ENCODE measurements at regions of chr15 and their contacts with region 1.

Region 1: GRCh38 chr15:81301815-81302399 is 22.0 kb downstream of the STARD5 start:
- DNase-seq: peak; percentile 60
- H3K4me3 Mint-ChIP-seq: peak overlapping the region; percentile 98
- H3K27ac Mint-ChIP-seq: peak overlapping the region; percentile 78
- H3K4me1 Mint-ChIP-seq: peaks cover 58% of the 10 kb centered on the region
- H3K27me3 Mint-ChIP-seq: no peaks in the 10 kb centered on the region

Region 2: GRCh38 chr15:81054236-81054635 is 247.7 kb before region 1 on chr15:
- CTCF ChIA-PET with region 1: no interaction called
- POLR2A ChIA-PET with region 1: no interaction called
- DNase-seq: no peak
- H3K4me3 Mint-ChIP-seq: no peak overlapping the region
- H3K27ac Mint-ChIP-seq: no peak overlapping the region
- H3K4me1 Mint-ChIP-seq: peaks cover 29% of the 10 kb centered on the region
- H3K27me3 Mint-ChIP-seq: peaks cover 5% of the 10 kb centered on the region

Region 3: DNA sequence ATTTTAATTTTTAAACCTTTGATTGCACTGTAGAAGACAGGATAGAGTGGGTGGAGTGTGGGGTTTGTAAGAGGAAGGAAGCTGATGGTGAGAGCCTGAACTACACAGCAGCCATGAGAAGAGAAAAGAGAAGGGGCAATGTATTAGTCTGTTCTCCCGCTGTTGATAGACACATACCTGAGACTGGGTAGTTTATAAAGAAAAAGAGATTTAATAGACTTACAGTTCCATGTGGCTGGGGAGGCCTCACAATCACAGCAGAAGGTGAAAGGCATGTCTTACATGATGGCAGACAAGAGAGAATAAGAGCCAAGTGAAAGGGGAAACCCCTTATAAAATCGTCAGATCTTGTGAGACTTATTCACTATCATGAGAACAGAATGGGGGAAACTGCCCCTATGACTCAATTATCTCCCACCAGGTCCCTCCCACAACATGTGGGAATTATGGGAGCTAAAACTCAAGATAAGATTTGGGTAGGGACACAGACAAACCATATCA is 15.2 kb before region 1 on chr15:
- CTCF ChIA-PET with region 1: interaction called, 8 read pairs
- POLR2A ChIA-PET with region 1: interaction called, 48 read pairs
- DNase-seq: no peak
- H3K4me3 Mint-ChIP-seq: no peak overlapping the region
- H3K27ac Mint-ChIP-seq: peak overlapping the region; percentile 69
- H3K4me1 Mint-ChIP-seq: peaks cover 49% of the 10 kb centered on the region
- H3K27me3 Mint-ChIP-seq: no peaks in the 10 kb centered on the region

Region 4: GRCh38 chr15:81311752-81312464 is 10.0 kb after region 1 on chr15:
- CTCF ChIA-PET with region 1: interaction called, 5 read pairs
- POLR2A ChIA-PET with region 1: interaction called, 35 read pairs
- DNase-seq: no peak
- H3K4me3 Mint-ChIP-seq: no peak overlapping the region
- H3K27ac Mint-ChIP-seq: peak overlapping the region; percentile 11
- H3K4me1 Mint-ChIP-seq: peaks cover 20% of the 10 kb centered on the region
- H3K27me3 Mint-ChIP-seq: no peaks in the 10 kb centered on the region

Region 5: DNA sequence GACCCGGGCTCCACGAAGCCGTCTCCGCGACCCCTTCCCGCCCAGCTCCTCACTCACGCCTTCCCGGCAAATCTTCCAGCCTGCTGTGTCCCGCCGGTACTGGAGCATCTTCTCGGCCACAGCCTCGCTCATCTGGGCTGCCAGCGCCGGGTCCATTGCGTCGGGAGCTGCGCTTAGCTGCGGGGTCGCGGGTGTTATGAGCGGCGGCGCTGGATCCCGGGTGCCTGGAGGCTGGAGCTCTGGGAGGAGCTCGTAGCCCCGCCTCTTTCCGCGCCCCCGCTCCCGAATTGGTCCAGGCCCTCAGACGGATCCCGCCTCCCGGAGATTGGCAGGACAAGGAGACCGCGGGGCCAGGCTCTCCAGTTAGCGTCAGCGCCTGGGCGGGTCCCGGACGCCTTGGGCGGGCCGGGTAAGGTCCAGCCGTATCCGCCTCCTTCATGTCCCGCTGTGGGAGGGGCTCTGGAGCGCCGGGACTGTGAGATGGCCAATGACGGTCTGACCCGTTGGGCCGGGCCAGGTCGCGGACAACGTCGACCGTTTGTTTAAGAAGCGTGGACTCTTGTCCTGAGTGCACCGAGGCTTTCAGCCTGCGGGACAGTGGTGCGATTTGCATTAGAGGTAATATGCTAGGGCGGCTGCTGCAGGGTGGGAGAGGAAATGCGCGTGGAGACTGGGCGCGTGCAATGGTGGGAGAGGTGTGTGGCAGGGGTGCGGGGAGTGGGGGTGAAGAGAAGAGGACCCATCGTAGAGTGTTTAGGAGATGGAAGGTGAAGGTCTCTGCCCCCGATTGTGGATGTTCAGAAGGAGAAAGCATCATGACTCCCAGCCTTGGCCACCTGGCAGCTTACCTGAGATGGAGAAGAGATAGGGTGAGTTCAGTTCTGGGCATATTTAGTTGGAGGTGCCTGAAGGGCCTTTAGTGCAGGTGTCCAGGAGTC is 22.3 kb after region 1 on chr15 and contains the start of gene STARD5:
- CTCF ChIA-PET with region 1: interaction called, 8 read pairs
- POLR2A ChIA-PET with region 1: interaction called, 10 read pairs
- DNase-seq: peak; percentile 97
- H3K4me3 Mint-ChIP-seq: peak within 1 kb of the TSS; percentile 85
- H3K27ac Mint-ChIP-seq: peak within 1 kb of the TSS; percentile 72
- H3K4me1 Mint-ChIP-seq: peaks cover 26% of the 10 kb centered on the region
- H3K27me3 Mint-ChIP-seq: no peaks in the 10 kb centered on the region
- total RNA-seq, gene STARD5: 4.2 TPM

Region 6: DNA sequence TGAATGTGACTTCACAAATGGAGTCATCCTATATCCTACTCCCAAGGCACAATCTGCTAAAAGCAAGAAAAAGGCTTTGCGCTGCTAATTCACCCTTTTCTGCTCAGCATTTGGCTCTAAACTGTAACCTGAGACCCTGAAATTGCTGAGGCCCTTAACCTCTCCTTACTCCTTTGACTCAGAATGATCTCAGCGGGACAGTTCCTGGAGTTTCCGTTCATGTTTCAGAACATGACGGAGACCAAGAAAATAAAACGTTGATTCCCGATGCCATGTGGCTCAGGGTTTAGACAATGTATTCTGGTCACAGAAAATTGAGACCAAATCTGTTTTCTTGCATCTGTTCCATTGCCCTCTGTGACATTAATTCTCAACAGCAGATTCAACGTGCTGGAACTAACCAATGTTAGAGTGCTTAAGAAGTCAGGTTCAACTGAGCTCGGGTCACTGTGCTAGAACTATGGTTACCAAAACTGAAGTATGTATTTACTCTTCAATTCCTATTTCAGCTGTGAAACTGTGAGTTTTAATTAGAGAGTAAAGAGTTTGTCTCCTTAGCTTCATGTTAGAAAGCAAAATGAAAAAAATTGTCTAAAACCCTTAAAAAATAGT is 117.5 kb after region 1 on chr15:
- CTCF ChIA-PET with region 1: no interaction called
- POLR2A ChIA-PET with region 1: no interaction called
- DNase-seq: no peak
- H3K4me3 Mint-ChIP-seq: no peak overlapping the region
- H3K27ac Mint-ChIP-seq: no peak overlapping the region
- H3K4me1 Mint-ChIP-seq: no peaks in the 10 kb centered on the region
- H3K27me3 Mint-ChIP-seq: peaks cover 8% of the 10 kb centered on the region

Measured in activated CD4-positive, alpha-beta memory T cell treated with anti-CD3 and anti-CD28 coated beads, Interleukin-2, amount 10 ng/mL, durations not matched to agents 7 days and 5 days (primary cell).